GM10248 (cell line): ENCODE measurements at regions of chr16 and their contacts with region 1.

Region 1: GRCh38 chr16:85086347-85087291 is 25.7 kb downstream of the CIBAR2 start:
- DNase-seq: peak; percentile 82
- CTCF ChIP-seq: peak; percentile 90

Region 2: GRCh38 chr16:84925092-84925772 is 161.4 kb before region 1 on chr16:
- CTCF ChIA-PET with region 1: interaction called, 12 read pairs
- POLR2A ChIA-PET with region 1: no interaction called
- DNase-seq: peak; percentile 77
- CTCF ChIP-seq: peak; percentile 82

Region 3: GRCh38 chr16:85027349-85027957 is 59.2 kb before region 1 on chr16 and contains the start of gene KIAA0513:
- CTCF ChIA-PET with region 1: interaction called, 21 read pairs
- POLR2A ChIA-PET with region 1: no interaction called
- DNase-seq: peak; percentile 99
- CTCF ChIP-seq: peak; percentile 31

Region 4: DNA sequence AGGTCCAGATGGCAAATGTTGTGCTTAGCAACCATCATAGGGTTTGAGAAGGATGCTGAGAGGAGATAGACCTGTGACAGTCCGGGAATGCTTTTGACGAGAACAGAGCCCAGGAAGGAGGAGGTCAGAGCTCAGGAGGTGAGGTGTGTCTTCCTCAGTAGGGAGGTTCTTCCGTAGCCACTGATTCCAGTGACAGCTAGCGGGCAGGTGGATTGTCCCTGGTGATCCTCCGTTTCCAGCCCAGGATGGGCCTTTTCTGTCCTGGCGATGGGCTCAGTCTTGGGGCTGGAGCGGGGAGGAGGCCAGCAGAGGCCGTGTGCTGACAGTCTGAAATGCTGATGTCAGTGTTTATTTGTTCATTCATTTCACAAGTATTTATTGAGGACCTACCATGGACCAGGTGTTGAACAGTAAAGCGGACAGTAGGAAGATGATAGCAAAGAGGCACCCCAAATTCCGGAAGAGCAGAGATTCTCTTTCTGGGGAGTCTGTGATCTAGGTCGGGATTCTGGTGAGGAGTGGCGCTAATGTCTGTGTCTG is 20.2 kb before region 1 on chr16:
- CTCF ChIA-PET with region 1: interaction called, 51 read pairs
- POLR2A ChIA-PET with region 1: no interaction called
- DNase-seq: no peak
- CTCF ChIP-seq: no peak

Region 5: GRCh38 chr16:85104821-85105391 is 18.3 kb after region 1 on chr16:
- CTCF ChIA-PET with region 1: interaction called, 38 read pairs
- POLR2A ChIA-PET with region 1: no interaction called
- DNase-seq: peak; percentile 48
- CTCF ChIP-seq: no peak

Region 6: GRCh38 chr16:85187002-85187401 is 100.4 kb after region 1 on chr16:
- CTCF ChIA-PET with region 1: no interaction called
- POLR2A ChIA-PET with region 1: no interaction called
- DNase-seq: no peak
- CTCF ChIP-seq: no peak

Region 7: GRCh38 chr16:85202631-85203461 is 116.2 kb after region 1 on chr16:
- CTCF ChIA-PET with region 1: no interaction called
- POLR2A ChIA-PET with region 1: no interaction called
- DNase-seq: no peak
- CTCF ChIP-seq: no peak